Prostate gland (tissue), 2 donors: ENCODE measurements at regions of chr2 and their contacts with region 1.

Region 1: DNA sequence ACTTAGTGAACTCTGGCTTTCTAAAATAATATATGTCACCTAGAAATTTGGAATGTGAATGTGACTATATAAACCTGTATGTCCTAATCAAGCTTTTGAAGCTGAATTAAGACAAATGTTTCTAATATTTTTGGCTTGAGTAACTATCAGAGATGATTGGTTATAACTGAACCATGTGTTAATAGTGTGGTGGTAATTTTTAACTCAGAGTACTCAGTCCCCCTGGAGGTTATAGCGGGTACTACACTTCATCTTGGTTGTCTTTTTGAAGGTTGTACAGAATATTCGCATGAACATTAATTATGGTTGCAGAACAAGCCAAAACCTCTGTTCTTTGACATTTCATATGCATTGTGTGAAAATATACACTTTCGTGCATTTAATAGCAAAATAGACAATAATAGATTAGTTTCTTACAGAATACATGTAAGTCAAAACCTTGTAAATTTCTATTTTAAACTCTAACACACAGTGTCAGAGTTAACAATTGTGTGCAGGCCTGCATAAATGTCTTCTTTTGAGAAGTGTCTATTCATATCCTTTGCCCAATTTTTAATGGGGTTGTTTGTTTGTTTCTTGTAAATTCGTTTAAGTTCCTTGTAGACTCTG is 86.0 kb downstream of the OSBPL6 start:
- DNase-seq: peak; percentile 39
- H3K4me3 ChIP-seq: no peak overlapping the region
- H3K27ac ChIP-seq: no peak overlapping the region
- H3K4me1 ChIP-seq: no peaks in the 10 kb centered on the region
- H3K27me3 ChIP-seq: no peaks in the 10 kb centered on the region
- CTCF ChIP-seq: peak; percentile 59 to 77 (median 74)
- POLR2A ChIP-seq: no peak

Region 2: DNA sequence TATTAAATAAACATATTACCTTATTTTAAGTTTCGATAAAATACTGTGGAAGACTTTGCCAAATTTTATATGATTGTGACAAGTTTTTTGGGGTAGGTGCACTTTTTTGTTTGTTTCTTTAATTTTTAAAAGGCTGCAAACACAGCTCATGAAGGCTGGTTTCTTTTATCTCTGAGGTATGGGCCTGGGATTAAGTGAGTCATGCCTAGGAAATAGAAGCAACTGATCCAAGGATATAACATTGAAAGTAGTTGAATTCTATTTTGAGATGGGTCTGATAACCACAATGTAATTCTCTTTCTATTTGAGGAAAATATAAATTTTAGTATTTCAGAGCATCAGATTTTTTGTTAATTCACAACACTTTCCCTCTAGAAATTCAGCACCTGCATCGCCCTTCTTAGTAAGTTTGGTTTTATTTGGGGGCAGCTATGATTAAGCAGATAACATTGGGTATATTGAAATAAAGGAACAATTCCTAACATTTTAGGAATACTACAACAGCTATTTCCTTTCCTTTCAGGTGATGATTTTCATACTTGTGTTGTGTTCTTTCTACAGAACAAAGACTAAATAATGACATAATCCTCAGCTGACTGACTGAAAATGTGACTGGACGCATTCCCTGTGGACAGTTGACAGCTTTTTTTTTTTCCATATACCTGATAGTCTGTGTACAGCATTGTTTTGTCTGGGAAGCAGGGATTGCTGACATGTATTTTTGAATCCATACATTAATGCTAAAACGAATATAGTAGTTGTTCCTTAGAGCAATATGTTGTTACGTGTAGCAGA is 151.3 kb before region 1 on chr2:
- intact Hi-C with region 1: loop called (anchors 5 kb)
- DNase-seq: no peak
- H3K4me3 ChIP-seq: no peak overlapping the region
- H3K27ac ChIP-seq: no peak overlapping the region
- H3K4me1 ChIP-seq: no peaks in the 10 kb centered on the region
- H3K27me3 ChIP-seq: no peaks in the 10 kb centered on the region
- CTCF ChIP-seq: no peak
- POLR2A ChIP-seq: no peak

Region 3: GRCh38 chr2:178193823-178194599 is 86.3 kb before region 1 on chr2 and contains the start of gene OSBPL6:
- intact Hi-C with region 1: loop called (anchors 10 kb)
- DNase-seq: peak; percentile 81
- H3K4me3 ChIP-seq: peak within 1 kb of the TSS; percentile 60 to 74
- H3K27ac ChIP-seq: peak within 1 kb of the TSS; percentile 95
- H3K4me1 ChIP-seq: no peaks in the 10 kb centered on the region
- H3K27me3 ChIP-seq: no peaks in the 10 kb centered on the region
- CTCF ChIP-seq: peak in 2 of 4 experiments; percentile 58 to 70
- POLR2A ChIP-seq: peak; percentile 71
- total RNA-seq, gene OSBPL6: 2.4 to 10.8 TPM

Region 4: GRCh38 chr2:178718283-178718682 is 437.9 kb after region 1 on chr2:
- intact Hi-C with region 1: no loop called
- DNase-seq: no peak
- H3K4me3 ChIP-seq: no peak overlapping the region
- H3K27ac ChIP-seq: no peak overlapping the region
- H3K4me1 ChIP-seq: no peaks in the 10 kb centered on the region
- H3K27me3 ChIP-seq: no peaks in the 10 kb centered on the region
- CTCF ChIP-seq: no peak
- POLR2A ChIP-seq: no peak

Region 5: DNA sequence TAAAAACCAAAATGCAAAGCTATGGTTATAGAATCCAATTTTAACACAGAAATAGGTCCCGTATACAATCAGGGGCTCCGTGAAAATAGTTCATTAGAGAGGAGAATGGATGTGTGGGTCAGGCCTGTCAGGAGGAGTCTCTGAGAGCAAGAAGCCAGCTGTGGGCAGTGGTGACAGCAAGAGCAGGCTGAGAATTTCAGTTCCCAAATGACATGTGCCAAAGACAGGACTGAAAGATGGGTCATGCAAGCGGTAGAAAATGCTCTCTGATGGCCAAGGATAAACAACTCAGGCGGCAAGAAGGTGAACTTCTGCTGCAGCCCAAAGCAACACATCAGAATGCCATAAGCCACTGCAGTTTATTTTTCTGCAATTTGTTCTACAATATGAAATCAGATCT is 669.2 kb after region 1 on chr2:
- intact Hi-C with region 1: no loop called
- DNase-seq: no peak
- H3K4me3 ChIP-seq: no peak overlapping the region
- H3K27ac ChIP-seq: no peak overlapping the region
- H3K4me1 ChIP-seq: no peaks in the 10 kb centered on the region
- H3K27me3 ChIP-seq: no peaks in the 10 kb centered on the region
- CTCF ChIP-seq: no peak
- POLR2A ChIP-seq: no peak